ENCODE measurements at regions of chr19 and their contacts with region 1.

Region 1: DNA sequence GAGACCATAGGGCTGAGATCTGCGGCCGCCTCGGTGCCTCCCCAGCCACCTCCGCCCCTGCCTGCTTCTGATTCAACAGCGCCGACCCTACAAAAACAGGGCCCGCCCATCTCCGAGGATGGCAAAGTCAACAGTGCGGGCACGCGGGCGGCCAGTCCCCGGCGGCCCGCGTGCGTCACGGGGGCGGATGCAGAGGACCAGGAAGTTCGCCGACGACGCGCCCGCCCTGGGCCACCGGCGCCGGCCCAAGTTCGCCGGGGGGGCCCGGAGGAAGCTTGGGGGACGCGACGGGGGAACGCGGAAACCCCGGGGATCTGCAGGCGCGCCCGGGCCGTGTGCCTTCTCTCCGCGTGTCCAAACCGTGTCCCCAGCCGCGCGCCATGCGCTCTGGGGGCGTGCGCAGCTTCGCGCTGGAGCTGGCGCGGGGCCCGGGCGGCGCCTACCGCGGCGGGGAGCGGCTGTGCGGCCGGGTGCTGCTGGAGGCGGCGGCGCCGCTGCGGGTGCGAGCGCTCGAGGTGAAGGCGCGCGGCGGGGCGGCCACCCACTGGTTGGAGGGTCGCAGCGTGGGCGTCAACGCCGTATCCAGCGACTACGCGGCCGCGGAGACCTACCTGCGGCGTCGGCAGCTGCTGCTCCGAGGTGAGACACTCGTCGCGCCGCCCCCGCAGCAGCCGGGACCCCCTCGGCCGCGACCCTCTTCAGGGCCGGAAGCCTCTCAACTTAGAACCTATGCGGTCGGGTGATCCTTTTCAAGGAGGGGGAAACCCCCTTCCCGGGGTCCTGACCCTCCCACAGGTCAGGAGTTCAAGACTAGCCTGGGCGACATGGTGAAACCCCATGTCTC is 6.8 kb upstream of the ARRDC2 start:
- DNase-seq: no peak
- ATAC-seq: peak; percentile 84
- H3K4me3 ChIP-seq: peak overlapping the region; percentile 75
- H3K27ac ChIP-seq: peak overlapping the region; percentile 62
- H3K4me1 ChIP-seq: peaks cover 5% of the 10 kb centered on the region; the same call in 1 of the 2 replicates
- H3K27me3 ChIP-seq: no peaks in the 10 kb centered on the region
- CTCF ChIP-seq: no peak
- EP300 ChIP-seq: no peak
- POLR2A ChIP-seq: peak; percentile 81
- RAD21 ChIP-seq: no peak

Region 2: GRCh38 chr19:17873786-17874757 is 127.1 kb before region 1 on chr19:
- CTCF ChIA-PET with region 1: no interaction called
- POLR2A ChIA-PET with region 1: no interaction called
- RAD21 ChIA-PET with region 1: no interaction called
- SMC1A ChIA-PET with region 1: no interaction called
- in situ Hi-C with region 1: no loop called
- intact Hi-C with region 1: loop called (anchors 5 kb)
- DNase-seq: no peak
- ATAC-seq: peak; percentile 90
- H3K4me3 ChIP-seq: peak overlapping the region; percentile 1; the same call in 1 of the 2 replicates
- H3K27ac ChIP-seq: no peak overlapping the region
- H3K4me1 ChIP-seq: peaks cover 3% of the 10 kb centered on the region; the same call in 1 of the 2 replicates
- H3K27me3 ChIP-seq: peaks cover 3 to 4% of the 10 kb centered on the region in 2 experiments; a peak in 3 of 4 replicates
- CTCF ChIP-seq: no peak
- EP300 ChIP-seq: no peak
- POLR2A ChIP-seq: no peak
- RAD21 ChIP-seq: no peak

Region 3: GRCh38 chr19:17938092-17938845 is 62.9 kb before region 1 on chr19:
- CTCF ChIA-PET with region 1: interaction called, 302 read pairs
- POLR2A ChIA-PET with region 1: interaction called, 9 read pairs
- RAD21 ChIA-PET with region 1: interaction called, 113 read pairs
- SMC1A ChIA-PET with region 1: interaction called, 90 read pairs
- in situ Hi-C with region 1: loop called (anchors 10 kb)
- intact Hi-C with region 1: loop called (anchors 1 kb)
- DNase-seq: no peak
- ATAC-seq: peak; percentile 99
- H3K4me3 ChIP-seq: no peak overlapping the region
- H3K27ac ChIP-seq: no peak overlapping the region
- H3K4me1 ChIP-seq: no peaks in the 10 kb centered on the region; the same call in 1 of the 2 replicates
- H3K27me3 ChIP-seq: no peaks in the 10 kb centered on the region
- CTCF ChIP-seq: peak; percentile 95 to 98 (median 96)
- EP300 ChIP-seq: no peak
- POLR2A ChIP-seq: no peak
- RAD21 ChIP-seq: peak; percentile 94

Region 4: DNA sequence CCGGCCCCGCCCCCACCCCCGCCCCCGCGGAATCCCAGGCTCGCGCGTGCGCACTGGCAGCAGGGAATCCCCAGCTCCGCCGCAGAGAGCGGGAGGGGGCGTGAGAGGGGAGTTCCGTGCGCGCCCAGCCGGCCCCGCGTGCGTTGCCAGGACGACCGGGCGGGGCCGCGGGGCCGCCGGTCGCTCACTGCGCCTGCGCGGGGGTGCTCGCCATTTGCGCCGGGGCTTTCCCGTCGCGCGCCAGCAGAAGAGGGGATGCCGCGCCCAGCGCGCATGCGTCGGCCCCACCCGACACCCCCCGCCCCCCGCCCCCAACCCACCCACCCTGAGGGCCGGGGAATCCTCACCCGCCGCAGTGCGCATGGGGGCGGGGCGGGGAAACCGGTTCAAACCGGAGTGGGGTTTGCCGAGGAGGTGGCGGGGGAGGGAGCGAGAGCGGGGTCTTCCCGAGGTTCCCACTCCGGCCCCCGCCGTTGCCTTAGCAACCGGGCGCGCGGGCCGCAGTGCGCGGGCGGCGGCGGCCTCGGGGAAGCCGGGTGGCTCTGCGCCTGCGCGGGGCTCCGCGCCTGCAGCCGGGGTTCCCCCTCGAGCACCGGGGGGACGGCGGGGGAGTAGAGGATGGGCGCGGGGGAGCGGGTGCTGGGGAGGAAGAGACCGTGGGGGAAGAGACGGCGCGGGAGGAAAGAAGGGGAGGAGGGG is 53.2 kb before region 1 on chr19:
- CTCF ChIA-PET with region 1: interaction called, 62 read pairs
- POLR2A ChIA-PET with region 1: interaction called, 14 read pairs
- RAD21 ChIA-PET with region 1: interaction called, 23 read pairs
- SMC1A ChIA-PET with region 1: interaction called, 6 read pairs
- in situ Hi-C with region 1: loop called (anchors 10 kb)
- intact Hi-C with region 1: loop called (anchors 2 kb)
- DNase-seq: no peak
- ATAC-seq: peak; percentile 49
- H3K4me3 ChIP-seq: peak overlapping the region; percentile 57; the same call in 1 of the 2 replicates
- H3K27ac ChIP-seq: no peak overlapping the region; the same call in 1 of the 2 replicates
- H3K4me1 ChIP-seq: peaks cover 45% of the 10 kb centered on the region
- H3K27me3 ChIP-seq: peaks cover 6 to 8% of the 10 kb centered on the region in 2 experiments
- CTCF ChIP-seq: no peak
- EP300 ChIP-seq: no peak
- POLR2A ChIP-seq: no peak; the same call in 1 of the 2 replicates
- RAD21 ChIP-seq: no peak